RWPE1 (cell line): ENCODE measurements at regions of chr1 and their contacts with region 1.

Region 1: DNA sequence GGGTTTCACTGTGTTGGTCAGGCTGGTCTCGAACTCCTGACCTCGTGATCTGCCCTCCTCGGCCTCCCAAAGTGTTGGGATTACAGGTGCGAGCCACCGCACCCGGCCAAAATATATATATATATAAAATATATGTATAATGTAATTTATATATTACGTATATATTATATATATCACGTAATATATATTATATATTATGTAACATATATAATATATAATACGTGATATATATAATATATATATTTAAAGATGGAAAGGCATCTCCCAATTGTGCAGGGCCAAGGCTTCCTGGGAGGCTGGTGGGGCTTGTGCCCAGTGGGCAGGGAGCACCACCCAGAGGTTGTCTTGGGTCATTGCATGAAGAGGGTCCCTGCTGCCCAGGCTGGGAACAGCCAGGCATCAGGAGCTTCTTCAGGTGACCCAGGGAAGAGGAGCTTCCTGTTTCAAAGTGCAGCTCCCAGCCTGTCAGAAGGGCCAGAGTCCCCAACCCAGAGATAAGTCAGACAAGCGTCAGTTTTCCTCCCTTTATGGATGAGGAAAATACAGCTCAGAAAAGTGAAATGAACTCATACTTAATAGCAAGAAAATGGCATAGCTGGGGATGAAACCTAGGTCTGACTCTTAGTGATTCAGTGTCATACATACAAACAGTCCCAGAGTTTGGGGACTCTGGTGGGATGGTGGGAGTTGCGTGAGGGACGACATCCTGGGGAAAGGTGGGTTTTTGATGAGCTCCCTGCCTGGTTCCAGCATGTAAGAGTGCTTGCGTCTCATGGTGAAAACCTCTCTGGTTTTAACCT is 12.0 kb downstream of the UBE2Q1 start:
- DNase-seq: peak; percentile 66
- H3K27ac ChIP-seq: peak overlapping the region; percentile 76
- CTCF ChIP-seq: peak; percentile 34

Region 2: GRCh38 chr1:154479764-154480421 is 66.6 kb before region 1 on chr1:
- CTCF ChIA-PET with region 1: interaction called, 16 read pairs
- POLR2A ChIA-PET with region 1: no interaction called
- DNase-seq: peak; percentile 86
- H3K27ac ChIP-seq: no peak overlapping the region
- CTCF ChIP-seq: peak; percentile 94